ENCODE measurements at regions of chr9 and their contacts with region 1.

Region 1: GRCh38 chr9:130707225-130707976 is 13.8 kb downstream of the EXOSC2 start:
- DNase-seq: peak; percentile 82
- H3K4me3 Mint-ChIP-seq: no peak overlapping the region
- H3K27ac Mint-ChIP-seq: peak overlapping the region; percentile 65
- H3K4me1 Mint-ChIP-seq: peaks cover 5% of the 10 kb centered on the region
- H3K27me3 Mint-ChIP-seq: no peaks in the 10 kb centered on the region

Region 2: GRCh38 chr9:130444565-130445221 is 262.7 kb before region 1 on chr9 and contains the start of gene ASS1:
- CTCF ChIA-PET with region 1: no interaction called
- intact Hi-C with region 1: no loop called
- DNase-seq: peak; percentile 47
- H3K4me3 Mint-ChIP-seq: peak within 1 kb of the TSS; percentile 55
- H3K27ac Mint-ChIP-seq: no peak within 1 kb of the TSS
- H3K4me1 Mint-ChIP-seq: peaks cover 16% of the 10 kb centered on the region
- H3K27me3 Mint-ChIP-seq: peaks cover 30% of the 10 kb centered on the region
- total RNA-seq, gene ASS1: 12.4 to 14.3 TPM

Region 3: GRCh38 chr9:130682490-130683121 is 24.8 kb before region 1 on chr9:
- CTCF ChIA-PET with region 1: interaction called, 11 read pairs
- intact Hi-C with region 1: no loop called
- DNase-seq: peak; percentile 74
- H3K4me3 Mint-ChIP-seq: peak overlapping the region; percentile 90
- H3K27ac Mint-ChIP-seq: no peak overlapping the region
- H3K4me1 Mint-ChIP-seq: peaks cover 8% of the 10 kb centered on the region
- H3K27me3 Mint-ChIP-seq: peaks cover 8% of the 10 kb centered on the region

Region 4: GRCh38 chr9:130770679-130771442 is 63.5 kb after region 1 on chr9:
- CTCF ChIA-PET with region 1: interaction called, 3 read pairs
- intact Hi-C with region 1: loop called (anchors 5 kb)
- DNase-seq: peak; percentile 23
- H3K4me3 Mint-ChIP-seq: no peak overlapping the region
- H3K27ac Mint-ChIP-seq: no peak overlapping the region
- H3K4me1 Mint-ChIP-seq: peaks cover 26% of the 10 kb centered on the region
- H3K27me3 Mint-ChIP-seq: no peaks in the 10 kb centered on the region

Region 5: GRCh38 chr9:130866474-130866965 is 159.1 kb after region 1 on chr9:
- CTCF ChIA-PET with region 1: interaction called, 11 read pairs
- intact Hi-C with region 1: loop called (anchors 1 kb)
- DNase-seq: peak; percentile 79
- H3K4me3 Mint-ChIP-seq: no peak overlapping the region
- H3K27ac Mint-ChIP-seq: no peak overlapping the region
- H3K4me1 Mint-ChIP-seq: no peaks in the 10 kb centered on the region
- H3K27me3 Mint-ChIP-seq: no peaks in the 10 kb centered on the region

Region 6: GRCh38 chr9:131046581-131047202 is 339.3 kb after region 1 on chr9:
- CTCF ChIA-PET with region 1: interaction called, 3 read pairs
- intact Hi-C with region 1: loop called (anchors 5 kb)
- DNase-seq: peak; percentile 78
- H3K4me3 Mint-ChIP-seq: peak overlapping the region; percentile 16
- H3K27ac Mint-ChIP-seq: no peak overlapping the region
- H3K4me1 Mint-ChIP-seq: peaks cover 8% of the 10 kb centered on the region
- H3K27me3 Mint-ChIP-seq: peaks cover 4% of the 10 kb centered on the region

Measured in activated naive CD4-positive, alpha-beta T cell treated with anti-CD3 and anti-CD28 coated beads for 36 hours (primary cell).